CD14-positive monocyte (primary cell): ENCODE measurements at regions of chr11 and their contacts with region 1.

Region 1: DNA sequence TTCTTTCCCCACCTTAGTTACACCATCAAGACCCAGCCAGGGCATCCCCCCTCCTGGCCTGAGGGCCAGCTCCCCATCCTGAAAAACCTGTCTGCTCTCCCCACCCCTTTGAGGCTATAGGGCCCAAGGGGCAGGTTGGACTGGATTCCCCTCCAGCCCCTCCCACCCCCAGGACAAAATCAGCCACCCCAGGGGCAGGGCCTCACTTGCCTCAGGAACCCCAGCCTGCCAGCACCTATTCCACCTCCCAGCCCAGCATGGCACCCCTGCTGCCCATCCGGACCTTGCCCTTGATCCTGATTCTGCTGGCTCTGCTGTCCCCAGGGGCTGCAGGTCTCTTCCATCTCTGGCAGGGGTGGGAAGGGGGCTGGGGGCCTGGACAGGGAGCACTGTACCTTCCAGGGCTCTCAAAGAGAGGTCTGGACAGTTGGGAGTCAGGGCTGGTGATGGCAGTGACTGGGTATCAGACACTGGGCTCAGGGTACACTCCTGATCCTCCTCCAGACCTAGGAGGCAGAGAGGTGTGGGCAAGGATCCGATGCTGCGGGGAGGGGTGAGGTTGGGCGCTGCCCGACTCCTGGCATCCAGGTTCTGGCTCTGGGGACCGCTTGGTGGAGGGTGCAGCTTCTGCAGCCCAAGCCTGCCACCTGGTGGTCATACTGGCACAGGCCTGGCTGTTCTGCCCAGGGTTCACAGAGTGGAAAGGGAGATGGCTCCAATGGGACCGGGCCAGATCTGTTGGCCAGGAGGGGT is at the start of gene UPK2:
- DNase-seq: peak; percentile 78 to 81 (median 80)
- H3K4me3 ChIP-seq: no peak within 1 kb of the TSS
- H3K4me3 Mint-ChIP-seq: peak within 1 kb of the TSS; percentile 31 to 48
- H3K27ac ChIP-seq: no peak within 1 kb of the TSS
- H3K27ac Mint-ChIP-seq: peak within 1 kb of the TSS in 3 of 7 donors; percentile 15 to 61 (median 25)
- H3K4me1 ChIP-seq: no peaks in the 10 kb centered on the region
- H3K4me1 Mint-ChIP-seq: peaks cover 3% of the 10 kb centered on the region
- H3K27me3 ChIP-seq: no peaks in the 10 kb centered on the region
- H3K27me3 Mint-ChIP-seq: peaks cover 12 to 23% (median 13%) of the 10 kb centered on the region in 3 donors
- CTCF ChIP-seq: peak; percentile 91
- polyA plus RNA-seq, gene UPK2: not detected

Region 2: GRCh38 chr11:118689851-118690552 is 266.3 kb before region 1 on chr11:
- intact Hi-C with region 1: loop called in 1 of 2 experiments (anchors 5 kb)
- DNase-seq: peak; percentile 84 to 85 (median 84)
- H3K4me3 ChIP-seq: peak overlapping the region; percentile 19 to 78 (median 42)
- H3K4me3 Mint-ChIP-seq: peak overlapping the region; percentile 81 to 89
- H3K27ac ChIP-seq: peak overlapping the region; percentile 34 to 67
- H3K27ac Mint-ChIP-seq: peak overlapping the region; percentile 60 to 91 (median 85)
- H3K4me1 ChIP-seq: peaks cover 27 to 36% of the 10 kb centered on the region in 2 donors
- H3K4me1 Mint-ChIP-seq: peaks cover 29% of the 10 kb centered on the region
- H3K27me3 ChIP-seq: no peaks in the 10 kb centered on the region
- H3K27me3 Mint-ChIP-seq: peaks cover 12 to 35% (median 17%) of the 10 kb centered on the region in 3 donors
- CTCF ChIP-seq: peak; percentile 97

Region 3: GRCh38 chr11:118907051-118908042 is 48.9 kb before region 1 on chr11:
- intact Hi-C with region 1: loop called (anchors 1 kb)
- DNase-seq: peak; percentile 72 to 81 (median 76)
- H3K4me3 ChIP-seq: no peak overlapping the region
- H3K4me3 Mint-ChIP-seq: no peak overlapping the region
- H3K27ac ChIP-seq: no peak overlapping the region
- H3K27ac Mint-ChIP-seq: peak overlapping the region in 3 of 7 donors; percentile 10 to 60 (median 53)
- H3K4me1 ChIP-seq: peaks cover 21 to 24% of the 10 kb centered on the region in 2 donors
- H3K4me1 Mint-ChIP-seq: peaks cover 21% of the 10 kb centered on the region
- H3K27me3 ChIP-seq: no peaks in the 10 kb centered on the region
- H3K27me3 Mint-ChIP-seq: peaks cover 7 to 25% (median 14%) of the 10 kb centered on the region in 3 donors
- CTCF ChIP-seq: peak; percentile 93